HepG2 (cell line): ENCODE measurements at regions of chr2 and their contacts with region 1.

Region 1: GRCh38 chr2:228722311-228722710 is 540.8 kb upstream of the SPHKAP start:
- DNase-seq: no peak
- ATAC-seq: no peak
- H3K4me3 ChIP-seq: no peak overlapping the region
- H3K27ac ChIP-seq: no peak overlapping the region
- H3K4me1 ChIP-seq: no peaks in the 10 kb centered on the region
- H3K27me3 ChIP-seq: no peaks in the 10 kb centered on the region
- CTCF ChIP-seq: no peak
- EP300 ChIP-seq: no peak
- POLR2A ChIP-seq: no peak
- RAD21 ChIP-seq: no peak

Region 2: GRCh38 chr2:228747483-228747882 is 25.2 kb after region 1 on chr2:
- CTCF ChIA-PET with region 1: no interaction called
- POLR2A ChIA-PET with region 1: no interaction called
- in situ Hi-C with region 1: no loop called
- intact Hi-C with region 1: loop called (anchors 1 kb)
- DNase-seq: no peak
- ATAC-seq: no peak
- H3K4me3 ChIP-seq: no peak overlapping the region
- H3K27ac ChIP-seq: no peak overlapping the region
- H3K4me1 ChIP-seq: no peaks in the 10 kb centered on the region
- H3K27me3 ChIP-seq: no peaks in the 10 kb centered on the region
- CTCF ChIP-seq: no peak
- EP300 ChIP-seq: no peak
- POLR2A ChIP-seq: no peak
- RAD21 ChIP-seq: no peak